ENCODE measurements at regions of chr3 and their contacts with region 1.

Region 1: GRCh38 chr3:149273096-149273751 is 51.6 kb upstream of the CP start:
- DNase-seq: peak; percentile 65
- H3K4me3 Mint-ChIP-seq: no peak overlapping the region
- H3K27ac Mint-ChIP-seq: no peak overlapping the region
- H3K4me1 Mint-ChIP-seq: peaks cover 53% of the 10 kb centered on the region
- H3K27me3 Mint-ChIP-seq: no peaks in the 10 kb centered on the region
- CTCF ChIP-seq: peak; percentile 98

Region 2: GRCh38 chr3:148861277-148861869 is 411.9 kb before region 1 on chr3:
- CTCF ChIA-PET with region 1: no interaction called
- intact Hi-C with region 1: loop called (anchors 2 kb)
- DNase-seq: no peak
- H3K4me3 Mint-ChIP-seq: no peak overlapping the region
- H3K27ac Mint-ChIP-seq: no peak overlapping the region
- H3K4me1 Mint-ChIP-seq: no peaks in the 10 kb centered on the region
- H3K27me3 Mint-ChIP-seq: peaks cover under 1% of the 10 kb centered on the region
- CTCF ChIP-seq: peak; percentile 82

Region 3: DNA sequence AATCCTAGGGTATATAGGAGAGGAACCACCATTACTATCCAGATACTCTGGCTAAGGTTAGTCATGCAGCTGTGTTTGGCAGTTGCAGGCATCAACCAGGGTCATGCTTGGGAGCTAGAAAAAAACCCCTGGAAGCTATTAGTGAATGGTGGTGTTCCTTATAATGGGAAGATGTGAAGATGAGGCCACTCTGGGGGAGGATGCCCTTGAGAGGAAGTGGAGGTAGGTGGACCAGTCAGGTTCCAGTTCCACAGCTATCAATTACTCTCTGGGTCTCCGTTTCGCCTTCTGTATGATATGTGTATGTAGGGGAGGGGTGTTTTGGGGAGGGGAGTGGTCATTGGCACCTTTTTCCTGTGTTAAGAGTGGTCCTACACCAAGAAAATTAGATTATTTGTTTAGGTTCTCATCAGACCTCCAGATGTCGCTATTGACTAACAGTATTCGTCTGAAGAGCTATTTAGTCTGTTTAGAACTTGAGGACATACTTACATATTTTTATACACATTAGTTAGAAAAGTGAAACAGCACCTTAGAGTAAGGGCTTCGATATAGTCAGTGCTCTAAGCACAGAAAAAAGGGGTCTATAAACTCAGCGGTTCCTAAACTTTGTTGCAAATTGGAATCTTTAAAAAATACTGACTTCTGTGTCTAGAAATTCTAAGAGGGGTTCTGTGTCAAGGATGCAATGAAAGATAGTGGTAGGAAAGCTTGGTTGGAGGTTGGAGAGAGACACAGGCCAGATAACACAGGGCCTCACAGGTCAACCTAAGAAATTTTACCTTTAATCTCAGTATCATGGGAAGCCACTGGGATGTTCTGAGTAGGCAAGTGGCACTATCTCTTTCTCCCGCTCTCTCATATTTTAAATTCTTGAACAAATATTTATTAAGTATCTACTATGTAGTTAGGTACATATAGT is 152.9 kb before region 1 on chr3:
- CTCF ChIA-PET with region 1: interaction called, 21 read pairs
- intact Hi-C with region 1: loop called (anchors 1 kb)
- DNase-seq: peak; percentile 41
- H3K4me3 Mint-ChIP-seq: no peak overlapping the region
- H3K27ac Mint-ChIP-seq: no peak overlapping the region
- H3K4me1 Mint-ChIP-seq: no peaks in the 10 kb centered on the region
- H3K27me3 Mint-ChIP-seq: no peaks in the 10 kb centered on the region
- CTCF ChIP-seq: peak; percentile 81

Region 4: GRCh38 chr3:149203758-149204157 is 69.5 kb before region 1 on chr3:
- CTCF ChIA-PET with region 1: no interaction called
- intact Hi-C with region 1: loop called (anchors 5 kb)
- DNase-seq: no peak
- H3K4me3 Mint-ChIP-seq: no peak overlapping the region
- H3K27ac Mint-ChIP-seq: no peak overlapping the region
- H3K4me1 Mint-ChIP-seq: peaks cover 32% of the 10 kb centered on the region
- H3K27me3 Mint-ChIP-seq: no peaks in the 10 kb centered on the region
- CTCF ChIP-seq: no peak

Region 5: GRCh38 chr3:149330609-149331331 is 57.5 kb after region 1 on chr3:
- CTCF ChIA-PET with region 1: interaction called, 6 read pairs
- intact Hi-C with region 1: loop called (anchors 1 kb)
- DNase-seq: peak; percentile 43
- H3K4me3 Mint-ChIP-seq: no peak overlapping the region
- H3K27ac Mint-ChIP-seq: peak overlapping the region; percentile 14
- H3K4me1 Mint-ChIP-seq: peaks cover 39% of the 10 kb centered on the region
- H3K27me3 Mint-ChIP-seq: no peaks in the 10 kb centered on the region
- CTCF ChIP-seq: no peak

Region 6: DNA sequence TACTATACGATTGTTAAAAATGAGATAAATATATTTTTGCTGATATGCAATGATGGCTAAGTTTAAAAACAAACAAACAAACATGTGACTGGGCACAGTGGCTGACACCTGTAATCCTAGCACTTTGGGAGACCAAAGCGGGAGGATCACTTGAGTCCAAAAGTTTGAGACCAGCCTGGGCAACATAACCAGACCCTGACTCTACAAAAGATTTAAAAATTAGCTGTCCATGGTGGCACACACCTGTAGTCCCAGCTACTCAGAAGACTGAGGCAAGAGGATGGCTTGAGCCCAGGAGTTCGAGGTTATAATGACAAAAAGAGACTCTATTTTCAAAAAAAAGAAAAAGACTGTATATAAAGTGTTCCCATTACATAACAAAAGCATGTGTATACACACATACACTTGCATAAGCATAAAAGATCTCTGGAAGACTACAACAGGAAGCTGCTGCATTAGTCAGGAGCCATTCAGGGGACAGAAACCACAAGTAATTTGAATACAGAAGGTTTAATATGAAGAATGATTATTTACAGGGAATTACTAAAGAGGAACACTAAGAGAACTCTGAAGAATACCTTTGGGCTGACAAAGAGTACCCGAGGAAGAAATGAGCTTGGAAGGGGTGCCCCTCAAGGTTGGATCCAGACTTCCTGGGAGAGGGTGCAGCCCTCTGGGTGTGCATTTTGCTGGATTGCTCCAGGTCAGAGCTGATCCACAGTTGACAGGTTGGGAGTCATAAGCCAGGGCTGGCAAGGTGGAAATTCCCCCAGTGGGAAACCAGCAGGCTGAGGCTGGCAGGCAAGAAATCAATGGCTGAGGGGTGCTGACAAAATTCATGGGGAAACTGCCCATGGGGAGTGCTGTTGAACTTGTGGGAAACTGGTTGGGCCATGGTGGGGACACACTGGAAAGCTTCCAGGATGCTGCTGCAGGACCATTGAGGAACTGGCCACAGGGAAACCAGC is 69.5 kb after region 1 on chr3:
- CTCF ChIA-PET with region 1: no interaction called
- intact Hi-C with region 1: no loop called
- DNase-seq: peak; percentile 32
- H3K4me3 Mint-ChIP-seq: no peak overlapping the region
- H3K27ac Mint-ChIP-seq: peak overlapping the region; percentile 75
- H3K4me1 Mint-ChIP-seq: peaks cover 44% of the 10 kb centered on the region
- H3K27me3 Mint-ChIP-seq: no peaks in the 10 kb centered on the region
- CTCF ChIP-seq: no peak

Region 7: GRCh38 chr3:149736175-149736952 is 463.1 kb after region 1 on chr3:
- CTCF ChIA-PET with region 1: no interaction called
- intact Hi-C with region 1: no loop called
- DNase-seq: peak; percentile 58
- H3K4me3 Mint-ChIP-seq: no peak overlapping the region
- H3K27ac Mint-ChIP-seq: peak overlapping the region; percentile 30
- H3K4me1 Mint-ChIP-seq: peaks cover 27% of the 10 kb centered on the region
- H3K27me3 Mint-ChIP-seq: no peaks in the 10 kb centered on the region
- CTCF ChIP-seq: no peak